ENCODE measurements at regions of chr19 and their contacts with region 1.

Region 1: GRCh38 chr19:14571695-14572490 is at the start of gene NDUFB7:
- DNase-seq: peak; percentile 97
- H3K4me3 ChIP-seq: peak within 1 kb of the TSS; percentile 94
- H3K27ac ChIP-seq: peak within 1 kb of the TSS; percentile 82
- H3K4me1 ChIP-seq: peaks cover 13% of the 10 kb centered on the region
- H3K27me3 ChIP-seq: no peaks in the 10 kb centered on the region
- CTCF ChIP-seq: peak; percentile 92
- total RNA-seq, gene NDUFB7: 180 and 196 TPM in 2 replicates

Region 2: DNA sequence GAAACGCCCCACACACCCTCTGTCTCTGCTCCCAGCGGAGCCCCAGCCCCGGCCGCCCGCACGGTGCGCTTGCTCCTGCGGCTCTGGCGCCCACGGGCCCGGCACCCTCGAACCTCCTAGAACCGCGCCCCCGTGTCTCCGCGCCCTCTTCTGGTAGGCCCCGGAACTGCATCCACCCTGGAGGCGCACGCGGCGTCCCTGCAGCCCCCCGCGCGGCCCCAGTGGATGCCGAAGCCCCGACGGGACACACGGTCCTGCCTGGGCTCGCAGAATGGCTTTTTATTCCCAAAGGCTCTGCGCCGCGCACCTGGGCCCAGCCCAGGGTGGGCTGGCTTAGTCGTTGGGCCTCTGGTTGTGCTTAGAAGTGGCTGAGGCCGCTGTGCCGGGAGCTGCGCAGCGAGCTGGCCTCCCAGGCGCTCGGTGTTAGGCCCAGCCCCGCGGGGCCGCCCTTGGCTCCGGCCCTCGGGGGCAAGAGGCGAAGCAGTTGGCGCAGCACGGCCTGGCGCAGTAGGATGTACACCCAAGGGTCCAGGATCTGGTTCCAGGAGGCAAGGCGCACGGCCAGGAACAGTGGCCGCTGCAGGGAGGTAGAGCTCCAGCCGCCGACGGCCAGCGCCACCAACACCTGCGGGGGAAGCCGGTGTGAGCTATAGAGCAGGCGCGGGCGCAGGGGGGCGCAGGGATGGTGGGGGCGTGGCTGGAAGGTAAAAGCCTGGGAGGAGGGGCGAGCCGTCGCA is 99.5 kb before region 1 on chr19:
- CTCF ChIA-PET with region 1: no interaction called
- POLR2A ChIA-PET with region 1: no interaction called
- intact Hi-C with region 1: no loop called
- DNase-seq: peak; percentile 80
- H3K4me3 ChIP-seq: no peak overlapping the region
- H3K27ac ChIP-seq: no peak overlapping the region
- H3K4me1 ChIP-seq: peaks cover 28% of the 10 kb centered on the region
- H3K27me3 ChIP-seq: no peaks in the 10 kb centered on the region
- CTCF ChIP-seq: peak; percentile 99

Region 3: DNA sequence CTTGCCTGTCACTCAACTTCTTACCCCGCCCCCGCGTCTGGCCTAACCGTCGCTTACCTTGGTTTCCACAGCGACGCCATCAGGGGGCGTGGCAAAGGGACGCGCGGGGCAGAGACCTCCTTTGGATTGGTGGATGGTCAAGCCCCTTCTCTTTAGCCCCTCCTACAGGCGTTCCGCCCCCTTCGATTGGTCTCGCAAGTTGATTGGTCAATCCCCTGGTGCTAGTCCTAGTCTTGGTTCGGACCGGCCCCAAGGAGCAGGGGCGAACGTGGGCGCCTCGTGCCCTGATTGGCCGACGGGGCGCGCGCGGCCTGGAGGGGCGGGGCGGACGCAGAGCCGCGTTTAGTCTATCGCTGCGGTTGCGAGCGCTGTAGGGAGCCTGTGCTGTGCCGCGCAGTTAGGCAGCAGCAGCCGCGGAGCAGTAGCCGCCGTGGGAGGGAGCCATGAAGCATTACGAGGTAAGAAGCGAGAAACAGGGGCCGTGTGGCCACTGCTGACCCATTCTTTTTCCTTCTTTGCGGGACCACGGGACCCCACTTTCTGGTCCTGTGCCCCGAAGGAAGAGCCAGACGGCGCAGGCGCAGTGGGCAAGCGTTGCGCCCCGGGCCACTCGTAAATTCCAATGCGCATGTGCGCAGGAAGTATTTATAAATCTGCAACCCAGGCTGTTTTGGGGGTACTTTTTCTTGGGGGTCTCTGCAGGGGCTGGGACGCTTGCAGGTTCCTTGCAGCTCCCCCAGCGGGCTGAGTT is 42.5 kb before region 1 on chr19 and contains the start of gene TECR:
- CTCF ChIA-PET with region 1: no interaction called
- POLR2A ChIA-PET with region 1: no interaction called
- intact Hi-C with region 1: no loop called
- DNase-seq: peak; percentile 100
- H3K4me3 ChIP-seq: peak within 1 kb of the TSS; percentile 83
- H3K27ac ChIP-seq: peak within 1 kb of the TSS; percentile 81
- H3K4me1 ChIP-seq: no peaks in the 10 kb centered on the region
- H3K27me3 ChIP-seq: no peaks in the 10 kb centered on the region
- CTCF ChIP-seq: no peak
- total RNA-seq, gene TECR: 189 and 203 TPM in 2 replicates

Region 4: DNA sequence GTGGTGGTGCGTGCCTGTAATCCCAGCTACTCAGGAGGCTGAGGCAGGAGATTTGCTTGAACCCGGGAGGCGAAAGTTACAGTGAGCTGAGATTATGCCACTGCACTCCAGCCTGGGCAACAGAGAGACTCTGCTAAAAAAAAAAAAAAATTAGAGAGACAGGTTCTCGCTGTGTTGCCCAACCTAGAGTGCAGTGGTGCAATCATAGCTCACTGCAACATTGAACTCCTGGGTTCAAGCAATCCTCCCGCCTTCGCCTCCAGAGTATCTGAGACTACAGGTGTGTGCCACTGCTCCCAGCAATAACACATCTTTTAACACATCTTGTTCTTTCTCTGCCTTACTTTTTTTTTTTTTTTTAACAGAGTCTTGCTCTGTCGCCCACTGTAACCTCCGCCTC is 43.7 kb after region 1 on chr19:
- CTCF ChIA-PET with region 1: no interaction called
- POLR2A ChIA-PET with region 1: interaction called, 12 read pairs
- intact Hi-C with region 1: no loop called
- DNase-seq: no peak
- H3K4me3 ChIP-seq: no peak overlapping the region
- H3K27ac ChIP-seq: no peak overlapping the region
- H3K4me1 ChIP-seq: no peaks in the 10 kb centered on the region
- H3K27me3 ChIP-seq: no peaks in the 10 kb centered on the region
- CTCF ChIP-seq: no peak

Region 5: GRCh38 chr19:14686411-14686810 is 114.5 kb after region 1 on chr19:
- CTCF ChIA-PET with region 1: interaction called, 55 read pairs
- POLR2A ChIA-PET with region 1: interaction called, 3 read pairs
- intact Hi-C with region 1: loop called (anchors 1 kb)
- DNase-seq: peak; percentile 36
- H3K4me3 ChIP-seq: no peak overlapping the region
- H3K27ac ChIP-seq: no peak overlapping the region
- H3K4me1 ChIP-seq: peaks cover 6% of the 10 kb centered on the region
- H3K27me3 ChIP-seq: no peaks in the 10 kb centered on the region
- CTCF ChIP-seq: peak; percentile 61

Region 6: DNA sequence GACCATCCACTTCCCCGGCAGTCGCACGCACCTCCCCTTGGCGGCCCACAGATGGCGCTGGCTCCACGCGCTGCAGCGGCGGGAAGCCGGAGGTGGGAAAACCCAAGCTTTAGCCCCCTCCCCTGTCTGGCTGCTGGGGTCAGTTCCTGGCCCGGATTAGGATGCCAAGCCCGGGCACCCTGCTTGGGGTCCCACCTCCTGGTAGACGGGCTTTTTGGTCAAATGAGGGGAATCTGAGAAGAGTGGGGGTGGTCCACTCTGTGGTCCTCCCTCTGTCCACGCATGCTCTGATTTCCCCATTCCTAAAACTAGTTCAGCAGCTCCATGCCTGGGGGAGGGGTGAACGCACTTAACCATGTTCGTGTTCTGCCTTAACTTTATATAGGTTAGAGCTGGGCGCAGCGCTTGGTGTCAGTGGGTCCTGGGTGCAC is 214.5 kb after region 1 on chr19:
- CTCF ChIA-PET with region 1: no interaction called
- POLR2A ChIA-PET with region 1: no interaction called
- intact Hi-C with region 1: loop called (anchors 10 kb)
- DNase-seq: peak; percentile 63
- H3K4me3 ChIP-seq: no peak overlapping the region
- H3K27ac ChIP-seq: no peak overlapping the region
- H3K4me1 ChIP-seq: no peaks in the 10 kb centered on the region
- H3K27me3 ChIP-seq: no peaks in the 10 kb centered on the region
- CTCF ChIP-seq: peak; percentile 95

Region 7: GRCh38 chr19:14889994-14890642 is 318.2 kb after region 1 on chr19:
- CTCF ChIA-PET with region 1: no interaction called
- POLR2A ChIA-PET with region 1: no interaction called
- intact Hi-C with region 1: loop called (anchors 5 kb)
- DNase-seq: no peak
- H3K4me3 ChIP-seq: no peak overlapping the region
- H3K27ac ChIP-seq: no peak overlapping the region
- H3K4me1 ChIP-seq: no peaks in the 10 kb centered on the region
- H3K27me3 ChIP-seq: peaks cover 42% of the 10 kb centered on the region
- CTCF ChIP-seq: no peak

Region 8: DNA sequence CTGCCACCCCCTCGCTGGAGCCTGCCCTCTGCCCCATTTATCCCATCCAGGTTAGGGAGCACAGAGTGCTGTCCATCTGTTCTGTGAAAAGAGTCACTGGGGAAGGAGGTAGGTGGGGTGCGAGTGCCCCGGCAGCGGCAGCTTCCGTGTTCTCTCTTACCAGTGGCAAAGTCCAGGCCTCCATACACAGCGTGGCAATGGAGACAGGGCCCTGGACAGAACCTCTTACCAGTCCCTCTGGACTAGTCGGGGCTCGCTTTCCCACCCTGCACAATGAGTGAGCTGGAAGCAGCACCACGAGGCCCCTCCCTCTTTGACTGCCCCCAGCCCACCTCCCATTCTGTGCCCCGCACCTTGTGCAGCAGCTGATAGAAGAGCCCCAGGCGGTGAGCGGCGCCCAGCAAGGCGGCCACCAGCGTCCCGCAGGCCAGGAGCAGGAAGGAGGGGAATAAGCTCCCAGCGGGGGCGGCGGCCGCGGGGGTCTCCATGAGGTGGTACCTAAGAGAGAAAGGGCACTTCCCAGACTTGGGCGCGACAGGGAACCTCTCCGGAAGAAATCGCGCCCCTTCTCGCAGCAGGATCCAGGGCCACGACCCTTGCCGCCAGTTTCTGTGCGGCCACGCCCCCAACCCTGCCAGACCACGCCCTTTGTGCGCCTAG is 552.8 kb after region 1 on chr19:
- CTCF ChIA-PET with region 1: interaction called, 10 read pairs
- POLR2A ChIA-PET with region 1: no interaction called
- intact Hi-C with region 1: no loop called
- DNase-seq: no peak
- H3K4me3 ChIP-seq: peak overlapping the region; percentile 88
- H3K27ac ChIP-seq: peak overlapping the region; percentile 90
- H3K4me1 ChIP-seq: peaks cover 10% of the 10 kb centered on the region
- H3K27me3 ChIP-seq: no peaks in the 10 kb centered on the region
- CTCF ChIP-seq: no peak

Measured in A673 (cell line).